ENCODE measurements at regions of chr3 and their contacts with region 1.

Region 1: DNA sequence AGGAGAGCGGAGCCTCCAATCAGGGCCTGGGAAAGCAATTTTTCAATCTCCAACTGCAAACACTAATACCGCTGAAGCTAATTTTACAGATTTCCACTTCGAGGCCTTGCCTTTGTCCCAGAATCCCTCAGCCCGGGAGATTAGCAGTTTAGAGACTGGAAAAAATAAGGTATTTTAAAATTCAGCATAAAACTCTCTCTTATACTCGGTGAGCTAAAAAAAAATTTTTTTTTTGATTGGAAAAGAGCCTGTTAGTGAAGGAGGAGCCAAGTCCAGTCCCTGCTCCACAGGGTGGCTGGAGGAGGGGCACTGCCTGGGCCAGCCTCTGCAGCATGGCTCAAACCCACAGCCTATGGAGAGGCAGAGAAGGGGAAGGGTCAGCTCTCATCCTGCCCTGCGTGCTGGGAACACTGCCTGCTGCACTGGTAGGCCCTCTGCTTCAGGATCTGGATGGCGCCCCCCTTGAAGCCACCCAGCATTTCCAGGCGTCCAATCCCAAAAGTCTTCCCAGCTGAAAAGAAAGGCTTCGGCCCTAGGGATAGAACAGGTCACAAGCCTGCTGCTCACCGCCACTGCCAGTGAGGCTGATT is 48.9 kb downstream of the CACNA2D2 start:
- DNase-seq: no peak
- H3K4me3 ChIP-seq: no peak overlapping the region
- H3K27ac ChIP-seq: no peak overlapping the region
- H3K4me1 ChIP-seq: no peaks in the 10 kb centered on the region
- H3K27me3 ChIP-seq: no peaks in the 10 kb centered on the region
- CTCF ChIP-seq: no peak

Region 2: DNA sequence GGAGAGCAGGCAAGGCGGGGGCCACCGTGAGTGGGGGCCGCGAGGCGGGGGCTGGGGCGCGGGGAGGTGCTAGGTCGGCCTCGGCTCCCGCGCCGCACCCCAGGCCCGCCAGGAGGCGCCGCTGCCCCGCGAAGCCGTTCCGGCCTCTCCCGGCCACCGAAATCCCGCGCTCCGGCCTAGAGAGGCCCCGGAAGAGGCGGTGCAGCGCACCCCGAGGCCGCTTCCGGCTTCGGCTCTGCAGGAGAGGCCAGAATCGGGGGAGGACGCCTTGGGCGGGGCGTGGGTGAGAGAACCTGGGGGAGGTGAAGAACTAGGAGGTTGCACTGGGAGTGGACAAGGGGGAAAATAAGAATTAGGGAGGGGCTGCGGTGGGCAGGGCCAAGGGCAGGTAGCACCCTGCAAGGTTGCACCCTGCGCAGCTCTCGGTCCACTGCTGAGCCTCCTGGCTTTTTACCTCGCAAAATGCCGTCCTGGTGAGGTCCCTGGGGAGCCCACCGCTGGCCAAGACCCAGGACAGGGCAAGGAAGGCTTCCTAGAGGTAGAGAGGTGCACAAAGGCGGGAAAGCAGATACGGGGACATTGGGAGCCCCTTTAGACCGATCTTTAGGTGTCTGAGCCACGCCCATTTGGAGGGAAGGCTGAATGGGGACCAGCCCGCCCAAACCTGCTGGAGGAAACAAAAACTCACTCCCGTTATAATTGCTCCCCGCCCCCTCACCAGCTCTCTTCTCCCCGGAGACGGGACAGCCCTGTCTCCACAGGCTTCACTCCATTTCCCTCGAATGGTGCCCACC is 227.0 kb before region 1 on chr3:
- CTCF ChIA-PET with region 1: no interaction called
- dilution Hi-C with region 1: no loop called
- in situ Hi-C with region 1: no loop called
- intact Hi-C with region 1: no loop called
- DNase-seq: peak; percentile 96
- H3K4me3 ChIP-seq: peak overlapping the region; percentile 58 to 60 (median 59)
- H3K27ac ChIP-seq: peak overlapping the region; percentile 52
- H3K4me1 ChIP-seq: peaks cover 20% of the 10 kb centered on the region
- H3K27me3 ChIP-seq: no peaks in the 10 kb centered on the region
- CTCF ChIP-seq: peak; percentile 43 to 74

Region 3: GRCh38 chr3:50365080-50365841 is 89.3 kb before region 1 on chr3:
- CTCF ChIA-PET with region 1: no interaction called
- dilution Hi-C with region 1: no loop called
- in situ Hi-C with region 1: no loop called
- intact Hi-C with region 1: no loop called
- DNase-seq: peak; percentile 85
- H3K4me3 ChIP-seq: peak overlapping the region; percentile 40 to 76 (median 62)
- H3K27ac ChIP-seq: no peak overlapping the region
- H3K4me1 ChIP-seq: peaks cover 14% of the 10 kb centered on the region
- H3K27me3 ChIP-seq: no peaks in the 10 kb centered on the region
- CTCF ChIP-seq: peak in 1 of 2 donors; percentile 25

Region 4: GRCh38 chr3:50396488-50396887 is 58.1 kb before region 1 on chr3:
- CTCF ChIA-PET with region 1: no interaction called
- dilution Hi-C with region 1: loop called (anchors 5 kb)
- in situ Hi-C with region 1: no loop called
- intact Hi-C with region 1: no loop called
- DNase-seq: peak; percentile 84
- H3K4me3 ChIP-seq: no peak overlapping the region
- H3K27ac ChIP-seq: no peak overlapping the region
- H3K4me1 ChIP-seq: peaks cover 9% of the 10 kb centered on the region
- H3K27me3 ChIP-seq: peaks cover 5% of the 10 kb centered on the region
- CTCF ChIP-seq: no peak

Region 5: GRCh38 chr3:50509715-50510114 is 55.1 kb after region 1 on chr3:
- CTCF ChIA-PET with region 1: no interaction called
- dilution Hi-C with region 1: loop called (anchors 5 kb)
- in situ Hi-C with region 1: no loop called
- intact Hi-C with region 1: no loop called
- DNase-seq: no peak
- H3K4me3 ChIP-seq: no peak overlapping the region
- H3K27ac ChIP-seq: no peak overlapping the region
- H3K4me1 ChIP-seq: no peaks in the 10 kb centered on the region
- H3K27me3 ChIP-seq: no peaks in the 10 kb centered on the region
- CTCF ChIP-seq: no peak

Region 6: GRCh38 chr3:50536471-50537180 is 82.0 kb after region 1 on chr3:
- CTCF ChIA-PET with region 1: no interaction called
- dilution Hi-C with region 1: loop called (anchors 5 kb)
- in situ Hi-C with region 1: no loop called
- intact Hi-C with region 1: no loop called
- DNase-seq: peak; percentile 8
- H3K4me3 ChIP-seq: no peak overlapping the region
- H3K27ac ChIP-seq: no peak overlapping the region
- H3K4me1 ChIP-seq: peaks cover 9% of the 10 kb centered on the region
- H3K27me3 ChIP-seq: peaks cover 4% of the 10 kb centered on the region
- CTCF ChIP-seq: no peak

Measured in mammary epithelial cell (primary cell).